ENCODE measurements at regions of chr15 and their contacts with region 1.

Region 1: DNA sequence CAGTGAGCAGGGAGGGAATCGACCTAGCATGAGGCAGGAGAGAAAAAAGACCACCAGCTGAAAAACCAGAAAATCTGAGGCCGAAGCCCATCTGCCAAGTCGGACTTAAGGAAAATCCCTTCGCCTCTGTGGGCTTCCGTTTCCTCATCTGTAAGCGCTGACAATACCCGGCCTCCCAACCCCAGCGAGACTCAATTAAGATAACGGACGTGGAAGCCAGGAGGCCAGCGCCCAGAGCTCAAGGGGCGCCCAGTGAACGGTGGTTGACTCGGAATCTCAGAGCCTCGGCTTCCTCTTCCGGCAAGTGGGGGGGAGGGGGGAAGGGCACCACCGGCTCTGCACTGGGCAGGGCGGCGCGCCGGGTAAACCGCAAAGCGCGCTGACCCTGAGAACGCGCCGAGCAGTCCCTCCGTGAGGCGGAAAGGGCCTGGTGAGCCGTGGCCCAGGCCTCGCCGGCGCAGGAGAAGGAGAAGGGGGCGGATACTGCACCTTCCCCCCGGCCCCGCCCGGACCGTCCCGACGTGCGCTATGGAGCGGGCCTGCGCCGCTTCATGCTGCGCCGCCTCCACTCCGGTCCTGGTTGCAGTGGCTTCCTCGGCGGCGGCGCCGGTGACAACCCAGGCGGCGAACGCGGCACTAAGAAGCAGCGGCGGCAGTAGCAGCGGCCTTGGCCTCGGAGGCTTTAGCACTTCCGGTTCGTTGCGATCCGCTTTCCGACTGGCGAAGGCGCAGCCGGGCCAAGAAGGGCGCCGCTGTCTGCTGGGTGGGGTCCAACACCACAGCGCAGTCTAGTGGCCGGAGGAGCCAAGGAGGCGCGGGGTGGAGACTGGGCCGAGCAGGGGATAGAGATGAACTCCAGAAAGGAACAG is at the start of gene DPP8:
- DNase-seq: peak; percentile 89 to 95 (median 91)
- H3K4me3 ChIP-seq: peak within 1 kb of the TSS; percentile 85
- H3K4me3 Mint-ChIP-seq: peak within 1 kb of the TSS; percentile 88 to 100 (median 96)
- H3K27ac ChIP-seq: peak within 1 kb of the TSS; percentile 86
- H3K27ac Mint-ChIP-seq: peak within 1 kb of the TSS; percentile 91 to 99 (median 98)
- H3K4me1 ChIP-seq: peaks cover 50% of the 10 kb centered on the region
- H3K4me1 Mint-ChIP-seq: peaks cover 38 to 52% (median 51%) of the 10 kb centered on the region in 3 donors
- H3K27me3 ChIP-seq: no peaks in the 10 kb centered on the region
- H3K27me3 Mint-ChIP-seq: no peaks in the 10 kb centered on the region
- total RNA-seq, gene DPP8: 31.1 to 33.8 TPM

Region 2: DNA sequence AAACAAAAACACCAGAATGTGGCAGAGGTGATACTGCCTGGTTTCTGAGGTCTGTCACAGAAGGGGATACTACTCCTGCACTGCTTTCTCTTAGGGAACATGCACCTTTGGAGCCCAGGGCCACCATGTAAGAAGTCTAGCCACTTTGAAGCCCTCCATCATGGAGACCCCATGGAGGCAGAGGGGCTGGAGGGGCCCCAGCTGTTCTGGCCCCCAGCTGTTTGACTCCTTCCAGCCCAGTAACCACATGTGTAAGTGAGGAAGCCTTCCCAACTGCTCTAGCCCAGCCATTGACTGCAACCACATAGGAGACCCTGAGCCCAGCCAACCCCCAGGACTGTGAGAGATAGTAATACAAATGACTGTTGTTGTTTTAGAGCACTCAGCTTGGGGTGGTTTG is 85.5 kb before region 1 on chr15:
- CTCF ChIA-PET with region 1: no interaction called
- POLR2A ChIA-PET with region 1: no interaction called
- DNase-seq: no peak
- H3K4me3 ChIP-seq: no peak overlapping the region
- H3K4me3 Mint-ChIP-seq: no peak overlapping the region
- H3K27ac ChIP-seq: no peak overlapping the region
- H3K27ac Mint-ChIP-seq: no peak overlapping the region
- H3K4me1 ChIP-seq: no peaks in the 10 kb centered on the region
- H3K4me1 Mint-ChIP-seq: no peaks in the 10 kb centered on the region
- H3K27me3 ChIP-seq: no peaks in the 10 kb centered on the region
- H3K27me3 Mint-ChIP-seq: peaks cover 4 to 8% of the 10 kb centered on the region in 2 donors

Region 3: GRCh38 chr15:65530314-65531122 is 13.3 kb after region 1 on chr15 and contains the start of gene HACD3:
- CTCF ChIA-PET with region 1: interaction called, 18 read pairs
- POLR2A ChIA-PET with region 1: interaction called, 15 read pairs
- DNase-seq: peak; percentile 86 to 91 (median 88)
- H3K4me3 ChIP-seq: peak within 1 kb of the TSS; percentile 77
- H3K4me3 Mint-ChIP-seq: peak within 1 kb of the TSS; percentile 79 to 91 (median 89)
- H3K27ac ChIP-seq: peak within 1 kb of the TSS; percentile 60
- H3K27ac Mint-ChIP-seq: peak within 1 kb of the TSS; percentile 80 to 98 (median 91)
- H3K4me1 ChIP-seq: no peaks in the 10 kb centered on the region
- H3K4me1 Mint-ChIP-seq: peaks cover 30 to 42% (median 39%) of the 10 kb centered on the region in 3 donors
- H3K27me3 ChIP-seq: no peaks in the 10 kb centered on the region
- H3K27me3 Mint-ChIP-seq: no peaks in the 10 kb centered on the region
- total RNA-seq, gene HACD3: 46.1 to 51.4 TPM

Region 4: DNA sequence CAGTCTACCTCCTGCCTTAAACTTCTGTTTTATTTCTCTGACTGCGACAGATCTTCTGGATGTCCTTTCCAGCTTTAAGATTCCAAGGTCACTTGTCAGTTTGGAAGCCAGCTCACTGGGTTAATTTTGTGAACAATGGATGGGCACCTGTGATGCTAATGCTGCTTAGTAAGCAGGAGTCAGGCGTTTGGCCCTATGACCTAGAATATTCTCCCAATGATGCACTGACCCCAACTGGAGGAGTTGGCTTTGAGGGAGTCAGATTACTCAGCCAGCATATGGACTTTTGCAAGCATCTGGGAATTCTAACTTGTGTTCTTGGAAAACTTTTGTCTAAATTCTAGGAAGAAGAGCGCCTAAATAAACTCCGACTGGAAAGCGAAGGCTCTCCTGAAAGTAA is 41.1 kb after region 1 on chr15:
- CTCF ChIA-PET with region 1: no interaction called
- POLR2A ChIA-PET with region 1: no interaction called
- DNase-seq: no peak
- H3K4me3 ChIP-seq: no peak overlapping the region
- H3K4me3 Mint-ChIP-seq: no peak overlapping the region
- H3K27ac ChIP-seq: no peak overlapping the region
- H3K27ac Mint-ChIP-seq: no peak overlapping the region
- H3K4me1 ChIP-seq: no peaks in the 10 kb centered on the region
- H3K4me1 Mint-ChIP-seq: no peaks in the 10 kb centered on the region
- H3K27me3 ChIP-seq: no peaks in the 10 kb centered on the region
- H3K27me3 Mint-ChIP-seq: no peaks in the 10 kb centered on the region